GM23248 (cell line): ENCODE measurements at regions of chr4 and their contacts with region 1.

Region 1: DNA sequence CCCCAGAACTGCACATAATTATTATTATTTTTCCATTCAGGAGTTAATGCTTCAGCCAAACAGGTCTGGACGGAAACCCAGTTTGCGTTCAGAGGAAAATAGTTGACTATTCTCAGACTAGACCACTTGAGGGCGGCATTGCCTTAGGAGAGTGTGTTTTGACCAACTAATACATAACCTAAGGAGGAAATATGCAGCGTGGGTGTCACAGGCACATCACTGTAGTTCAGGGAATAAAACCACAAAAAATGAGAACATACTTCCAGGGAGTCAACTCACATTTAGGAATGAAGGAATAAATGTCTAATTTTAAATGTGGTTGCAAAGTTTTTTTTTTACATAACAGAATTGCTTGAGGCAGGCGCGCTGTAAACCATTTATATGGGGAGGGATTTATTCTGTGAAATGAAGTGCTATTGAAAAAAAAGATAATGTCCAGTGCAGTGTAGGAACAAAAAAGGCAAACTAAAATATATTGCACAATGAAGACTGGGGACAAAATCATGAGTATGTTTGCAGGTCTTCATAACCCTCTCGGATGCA is 93.3 kb downstream of the SYNPO2 start:
- DNase-seq: peak; percentile 97
- H3K4me3 ChIP-seq: no peak overlapping the region; the same call in 1 of the 2 replicates
- H3K27ac ChIP-seq: peak overlapping the region; percentile 44
- H3K4me1 ChIP-seq: peaks cover 23% of the 10 kb centered on the region
- H3K27me3 ChIP-seq: no peaks in the 10 kb centered on the region

Region 2: GRCh38 chr4:119299741-119300100 is 317.8 kb after region 1 on chr4:
- in situ Hi-C with region 1: loop called (anchors 10 kb)
- DNase-seq: no peak
- H3K4me3 ChIP-seq: peak overlapping the region; percentile 82
- H3K27ac ChIP-seq: peak overlapping the region; percentile 83
- H3K4me1 ChIP-seq: peaks cover 15% of the 10 kb centered on the region; the same call in 1 of the 2 replicates
- H3K27me3 ChIP-seq: no peaks in the 10 kb centered on the region